ENCODE measurements at regions of chr7 and their contacts with region 1.

Region 1: GRCh38 chr7:873367-874002 is 2.9 kb upstream of the GET4 start:
- DNase-seq: peak; percentile 38
- H3K4me3 ChIP-seq: no peak overlapping the region
- H3K27ac ChIP-seq: no peak overlapping the region
- H3K27me3 ChIP-seq: no peaks in the 10 kb centered on the region
- CTCF ChIP-seq: peak; percentile 92

Region 2: GRCh38 chr7:786472-787255 is 86.8 kb before region 1 on chr7:
- CTCF ChIA-PET with region 1: interaction called, 51 read pairs
- POLR2A ChIA-PET with region 1: interaction called, 12 read pairs
- DNase-seq: peak; percentile 21
- H3K4me3 ChIP-seq: no peak overlapping the region
- H3K27ac ChIP-seq: no peak overlapping the region
- H3K27me3 ChIP-seq: no peaks in the 10 kb centered on the region
- CTCF ChIP-seq: peak; percentile 92

Region 3: GRCh38 chr7:857661-858060 is 15.8 kb before region 1 on chr7:
- CTCF ChIA-PET with region 1: interaction called, 10 read pairs
- POLR2A ChIA-PET with region 1: no interaction called
- DNase-seq: no peak
- H3K4me3 ChIP-seq: no peak overlapping the region
- H3K27ac ChIP-seq: no peak overlapping the region
- H3K27me3 ChIP-seq: no peaks in the 10 kb centered on the region
- CTCF ChIP-seq: no peak